Common myeloid progenitor, CD34-positive (primary cell): ENCODE measurements at regions of chr1 and their contacts with region 1.

Region 1: GRCh38 chr1:67535474-67535873 is 105.3 kb upstream of the SERBP1 start:
- DNase-seq: peak; percentile 76 to 90 (median 86)
- H3K4me3 ChIP-seq: no peak overlapping the region
- H3K27ac ChIP-seq: no peak overlapping the region
- H3K4me1 ChIP-seq: peaks cover 0 to 4% (median 0%) of the 10 kb centered on the region in 4 experiments
- H3K27me3 ChIP-seq: no peaks in the 10 kb centered on the region

Region 2: DNA sequence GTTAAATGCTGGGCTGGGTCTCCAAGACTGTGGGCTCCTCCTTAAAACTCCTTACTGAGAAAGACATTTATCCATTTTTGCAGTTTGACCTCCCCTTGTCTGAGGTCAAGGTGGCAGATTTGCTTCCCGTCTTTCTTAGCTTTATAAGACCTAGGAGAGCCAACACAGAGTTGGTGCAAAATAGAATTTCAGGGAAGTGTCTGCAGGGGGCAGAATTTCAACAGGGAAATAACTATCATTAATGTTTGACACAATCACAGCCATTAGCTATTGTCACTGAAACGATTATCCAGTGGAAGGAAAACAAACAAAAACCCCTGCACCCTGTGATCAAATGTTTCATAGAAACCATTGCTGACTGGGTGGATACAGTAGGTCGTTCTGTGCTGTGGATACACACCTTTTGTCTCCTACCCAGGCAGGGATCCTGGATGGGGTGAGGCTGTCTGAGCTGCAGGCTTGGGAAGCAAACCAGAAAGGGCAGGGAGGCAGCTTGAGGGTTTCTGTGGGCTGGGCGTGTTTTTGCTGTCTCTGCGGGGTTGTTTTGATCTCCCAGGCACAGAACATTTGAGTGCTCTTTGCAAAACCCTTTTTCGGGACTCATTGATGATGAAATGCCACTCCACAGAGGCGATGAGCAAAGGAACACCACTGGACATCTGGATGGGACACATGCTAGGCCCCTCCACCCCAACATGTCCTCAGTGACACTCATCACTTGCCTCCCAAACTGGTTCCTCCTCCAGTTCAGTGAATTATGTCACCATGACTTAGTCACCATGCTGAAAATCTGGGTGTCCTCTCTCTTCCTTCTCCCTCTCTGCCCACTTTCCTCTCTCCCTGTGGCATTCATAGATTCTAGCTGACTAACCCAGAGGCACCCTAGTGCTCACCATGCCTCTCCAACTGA is 11.1 kb before region 1 on chr1:
- CTCF ChIA-PET with region 1: interaction called, 31 read pairs
- POLR2A ChIA-PET with region 1: interaction called, 3 read pairs
- DNase-seq: no peak
- H3K4me3 ChIP-seq: no peak overlapping the region
- H3K27ac ChIP-seq: no peak overlapping the region
- H3K4me1 ChIP-seq: peaks cover 0 to 5% (median 0%) of the 10 kb centered on the region in 4 experiments
- H3K27me3 ChIP-seq: no peaks in the 10 kb centered on the region

Region 3: GRCh38 chr1:67570473-67571143 is 35.1 kb after region 1 on chr1:
- CTCF ChIA-PET with region 1: interaction called, 20 read pairs
- POLR2A ChIA-PET with region 1: no interaction called
- DNase-seq: no peak
- H3K4me3 ChIP-seq: no peak overlapping the region
- H3K27ac ChIP-seq: no peak overlapping the region
- H3K4me1 ChIP-seq: no peaks in the 10 kb centered on the region
- H3K27me3 ChIP-seq: no peaks in the 10 kb centered on the region

Region 4: GRCh38 chr1:67747667-67748546 is 212.4 kb after region 1 on chr1:
- CTCF ChIA-PET with region 1: interaction called, 291 read pairs
- POLR2A ChIA-PET with region 1: no interaction called
- DNase-seq: no peak
- H3K4me3 ChIP-seq: peak overlapping the region in 3 of 7 experiments; percentile 30 to 48 (median 33)
- H3K27ac ChIP-seq: no peak overlapping the region
- H3K4me1 ChIP-seq: peaks cover 14 to 51% (median 28%) of the 10 kb centered on the region in 4 experiments
- H3K27me3 ChIP-seq: no peaks in the 10 kb centered on the region